ENCODE measurements at regions of chr6 and their contacts with region 1.

Region 1: GRCh38 chr6:163427498-163428254 is 13.2 kb downstream of the QKI start:
- DNase-seq: no peak
- ATAC-seq: peak; percentile 48 to 51

Region 2: DNA sequence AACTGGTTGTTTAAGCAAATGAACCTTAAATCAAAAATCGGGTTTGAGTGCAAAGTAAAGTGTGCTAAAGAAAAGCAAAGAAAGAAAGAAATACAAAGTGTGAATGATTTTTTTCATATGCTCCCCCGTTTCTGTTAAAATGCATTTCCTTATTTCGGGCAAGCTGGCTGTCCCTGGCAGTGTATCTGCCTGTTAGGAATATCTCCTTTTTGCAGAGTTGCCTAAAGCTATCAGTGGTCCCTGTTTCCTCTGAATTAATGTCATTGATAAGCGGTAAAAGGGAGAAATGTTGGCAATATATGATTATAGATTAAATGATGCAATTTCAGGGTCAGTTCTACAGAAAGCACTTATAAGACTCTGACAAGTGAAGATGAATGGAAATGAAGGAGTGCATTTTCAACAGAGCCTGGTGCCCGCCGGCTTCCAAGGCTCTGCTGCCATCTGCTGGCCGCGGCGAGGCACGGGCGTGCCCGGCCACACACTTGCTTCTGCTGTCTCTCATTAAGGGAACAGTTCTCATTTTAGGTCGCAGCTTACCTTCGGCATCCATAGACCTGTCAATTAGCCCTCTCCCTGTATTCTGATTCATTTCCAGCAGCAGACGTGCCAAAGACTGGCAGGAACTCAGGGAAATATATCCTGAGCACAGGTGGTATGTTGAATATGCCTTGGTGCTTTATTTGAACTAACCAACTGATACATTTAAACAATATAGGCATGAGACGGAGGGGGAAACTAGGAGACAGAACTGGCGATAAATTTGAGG is 1499.8 kb after region 1 on chr6:
- intact Hi-C with region 1: loop called in 1 of 2 experiments (anchors 10 kb)
- DNase-seq: peak; percentile 58
- ATAC-seq: peak; percentile 94 to 95